IMR-90 (cell line): ENCODE measurements at regions of chr3 and their contacts with region 1.

Region 1: GRCh38 chr3:47989981-47990440 is 26.2 kb downstream of the MAP4 start:
- DNase-seq: peak; percentile 96
- ATAC-seq: peak; percentile 87
- H3K4me3 ChIP-seq: no peak overlapping the region
- H3K27ac ChIP-seq: no peak overlapping the region
- H3K4me1 ChIP-seq: peaks cover 4% of the 10 kb centered on the region; the same call in 1 of the 2 replicates
- H3K27me3 ChIP-seq: no peaks in the 10 kb centered on the region
- CTCF ChIP-seq: peak; percentile 97
- POLR2A ChIP-seq: no peak
- RAD21 ChIP-seq: peak; percentile 95

Region 2: GRCh38 chr3:47836986-47837385 is 153.0 kb before region 1 on chr3:
- CTCF ChIA-PET with region 1: no interaction called
- POLR2A ChIA-PET with region 1: interaction called, 4 read pairs
- dilution Hi-C with region 1: no loop called
- in situ Hi-C with region 1: no loop called
- intact Hi-C with region 1: loop called (anchors 1 kb)
- DNase-seq: no peak
- ATAC-seq: no peak
- H3K4me3 ChIP-seq: no peak overlapping the region
- H3K27ac ChIP-seq: no peak overlapping the region
- H3K4me1 ChIP-seq: no peaks in the 10 kb centered on the region
- H3K27me3 ChIP-seq: no peaks in the 10 kb centered on the region
- CTCF ChIP-seq: no peak
- POLR2A ChIP-seq: no peak
- RAD21 ChIP-seq: no peak

Region 3: DNA sequence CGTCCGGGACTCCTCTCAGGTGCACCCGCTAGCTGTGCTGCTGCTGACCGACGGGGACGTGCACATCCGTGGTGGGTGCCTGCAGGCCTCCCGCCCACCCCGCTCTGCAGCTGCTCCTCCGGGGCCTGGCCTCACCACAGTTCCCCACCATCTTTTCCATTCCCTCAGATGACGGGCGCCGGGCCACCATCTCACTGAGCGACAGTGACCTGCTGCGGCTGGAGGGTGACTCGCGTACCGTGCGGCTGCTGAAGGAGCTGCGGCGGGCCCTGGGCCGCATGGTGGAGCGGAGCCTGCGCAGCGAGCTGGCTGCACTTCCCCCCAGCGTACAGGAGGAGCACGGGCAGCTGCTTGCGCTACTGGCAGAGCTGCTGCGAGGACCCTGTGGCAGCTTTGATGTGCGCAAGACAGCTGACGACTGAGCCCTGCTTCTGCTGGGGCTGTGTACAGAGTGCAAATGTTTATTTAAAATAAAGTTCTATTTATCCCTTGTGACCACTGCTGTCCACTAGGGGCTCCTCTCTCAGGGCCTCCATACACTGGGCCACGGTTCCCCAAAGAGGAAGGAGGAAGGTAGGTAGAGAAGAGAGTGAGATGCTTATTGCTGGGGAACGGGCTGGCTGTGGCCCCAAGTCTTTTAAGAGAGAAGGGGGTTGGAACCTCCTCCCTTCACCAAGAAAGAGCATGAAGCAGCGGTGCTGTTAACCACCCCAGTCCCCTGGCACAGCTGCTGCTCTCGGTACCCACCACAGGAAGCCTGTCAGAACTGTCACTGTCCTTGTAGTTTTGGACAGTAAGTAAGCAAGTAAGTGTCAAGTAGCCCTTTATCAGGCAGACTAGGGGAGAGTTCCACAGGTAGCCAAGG is 140.1 kb before region 1 on chr3:
- CTCF ChIA-PET with region 1: no interaction called
- POLR2A ChIA-PET with region 1: no interaction called
- dilution Hi-C with region 1: no loop called
- in situ Hi-C with region 1: no loop called
- intact Hi-C with region 1: loop called (anchors 1 kb)
- DNase-seq: peak; percentile 49
- ATAC-seq: peak; percentile 79
- H3K4me3 ChIP-seq: no peak overlapping the region
- H3K27ac ChIP-seq: no peak overlapping the region
- H3K4me1 ChIP-seq: peaks cover 2% of the 10 kb centered on the region; the same call in 1 of the 2 replicates
- H3K27me3 ChIP-seq: no peaks in the 10 kb centered on the region
- CTCF ChIP-seq: peak; percentile 51
- POLR2A ChIP-seq: peak; percentile 26; the same call in 1 of the 2 replicates
- RAD21 ChIP-seq: peak; percentile 33; the same call in 1 of the 2 replicates

Region 4: DNA sequence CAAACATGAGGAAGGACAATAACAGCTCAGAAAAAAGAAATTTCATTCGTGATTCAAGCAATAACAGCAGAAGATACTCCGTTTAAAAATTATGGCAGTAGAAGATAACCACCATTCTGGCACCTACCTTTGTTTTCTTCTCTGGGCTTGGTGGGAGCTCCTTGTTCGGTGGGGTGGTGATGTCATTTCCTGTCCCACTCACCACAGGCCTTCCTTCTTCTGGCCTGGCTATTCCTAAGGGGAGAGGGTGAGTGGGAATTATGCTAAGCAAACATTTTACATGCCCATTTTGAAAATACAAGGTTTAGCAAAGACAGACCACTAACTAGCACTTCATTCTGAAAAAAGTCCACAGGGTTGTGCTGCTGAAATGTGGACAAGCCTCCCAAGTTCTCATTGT is 112.7 kb before region 1 on chr3:
- CTCF ChIA-PET with region 1: interaction called, 3 read pairs
- POLR2A ChIA-PET with region 1: no interaction called
- dilution Hi-C with region 1: no loop called
- in situ Hi-C with region 1: no loop called
- intact Hi-C with region 1: loop called (anchors 5 kb)
- DNase-seq: peak; percentile 37
- ATAC-seq: no peak
- H3K4me3 ChIP-seq: no peak overlapping the region
- H3K27ac ChIP-seq: no peak overlapping the region
- H3K4me1 ChIP-seq: no peaks in the 10 kb centered on the region
- H3K27me3 ChIP-seq: no peaks in the 10 kb centered on the region
- CTCF ChIP-seq: no peak
- POLR2A ChIP-seq: no peak
- RAD21 ChIP-seq: no peak

Region 5: GRCh38 chr3:47976135-47976732 is 13.8 kb before region 1 on chr3:
- CTCF ChIA-PET with region 1: interaction called, 10 read pairs
- POLR2A ChIA-PET with region 1: no interaction called
- dilution Hi-C with region 1: no loop called
- in situ Hi-C with region 1: no loop called
- intact Hi-C with region 1: no loop called
- DNase-seq: no peak
- ATAC-seq: no peak
- H3K4me3 ChIP-seq: no peak overlapping the region
- H3K27ac ChIP-seq: no peak overlapping the region
- H3K4me1 ChIP-seq: peaks cover 2% of the 10 kb centered on the region; the same call in 1 of the 2 replicates
- H3K27me3 ChIP-seq: no peaks in the 10 kb centered on the region
- CTCF ChIP-seq: no peak
- POLR2A ChIP-seq: no peak
- RAD21 ChIP-seq: no peak

Region 6: DNA sequence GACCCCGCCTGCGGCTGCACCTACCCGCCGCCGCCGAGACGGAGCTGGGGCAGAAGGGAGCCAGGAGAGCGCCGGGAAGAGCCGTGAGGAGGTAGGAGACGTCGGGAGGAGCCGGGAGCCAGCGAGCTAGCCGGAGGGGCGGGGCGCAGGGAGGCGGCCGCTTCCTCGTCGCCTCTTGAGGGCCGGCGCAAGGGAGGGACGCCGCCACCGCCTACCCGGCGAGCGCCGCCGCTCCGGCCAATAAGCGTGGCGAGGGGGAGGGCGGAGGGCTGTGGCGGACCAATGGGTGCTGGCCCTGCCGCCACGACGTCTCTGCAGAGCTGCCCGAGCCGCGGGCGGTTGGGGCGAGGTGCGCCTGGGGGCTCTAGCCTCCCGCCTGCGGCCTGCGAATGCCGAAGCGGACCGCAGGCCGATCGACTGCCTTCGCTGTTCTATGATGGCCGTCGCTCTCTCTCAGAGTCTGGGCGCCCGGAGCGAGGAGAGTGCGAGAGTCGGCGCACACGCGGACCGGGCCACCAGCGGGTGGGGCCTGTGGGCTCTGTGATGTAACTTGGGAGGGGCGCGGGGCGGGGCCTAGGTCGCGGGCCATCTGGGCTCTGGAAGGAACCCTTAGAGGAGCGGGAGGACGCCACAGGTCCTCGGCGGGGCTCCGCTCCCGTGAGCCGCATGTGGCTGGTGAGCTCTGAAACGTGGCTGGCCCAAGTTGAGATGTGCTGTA is 98.9 kb after region 1 on chr3:
- CTCF ChIA-PET with region 1: interaction called, 3 read pairs
- POLR2A ChIA-PET with region 1: no interaction called
- dilution Hi-C with region 1: no loop called
- in situ Hi-C with region 1: no loop called
- intact Hi-C with region 1: loop called (anchors 5 kb)
- DNase-seq: peak; percentile 95
- ATAC-seq: peak; percentile 96
- H3K4me3 ChIP-seq: peak overlapping the region; percentile 84
- H3K27ac ChIP-seq: peak overlapping the region; percentile 92
- H3K4me1 ChIP-seq: 0 out of 2 replicates have a peak, but pooled peaks cover 6% of the 10 kb centered on the region
- H3K27me3 ChIP-seq: no peaks in the 10 kb centered on the region
- CTCF ChIP-seq: no peak
- POLR2A ChIP-seq: peak; percentile 95
- RAD21 ChIP-seq: peak; percentile 12; the same call in 1 of the 2 replicates

Region 7: GRCh38 chr3:48528754-48529153 is 538.7 kb after region 1 on chr3:
- CTCF ChIA-PET with region 1: no interaction called
- POLR2A ChIA-PET with region 1: no interaction called
- dilution Hi-C with region 1: no loop called
- in situ Hi-C with region 1: no loop called
- intact Hi-C with region 1: no loop called
- DNase-seq: no peak
- ATAC-seq: no peak
- H3K4me3 ChIP-seq: no peak overlapping the region
- H3K27ac ChIP-seq: no peak overlapping the region
- H3K4me1 ChIP-seq: no peaks in the 10 kb centered on the region
- H3K27me3 ChIP-seq: no peaks in the 10 kb centered on the region
- CTCF ChIP-seq: no peak
- POLR2A ChIP-seq: no peak
- RAD21 ChIP-seq: no peak